Caco-2 (cell line): ENCODE measurements at regions of chr22 and their contacts with region 1.

Region 1: GRCh38 chr22:20909543-20910303 is 7.5 kb upstream of the CRKL start:
- DNase-seq: no peak
- H3K4me3 ChIP-seq: no peak overlapping the region
- H3K4me3 Mint-ChIP-seq: no peak overlapping the region
- H3K27ac Mint-ChIP-seq: no peak overlapping the region
- H3K4me1 ChIP-seq: no peaks in the 10 kb centered on the region
- H3K4me1 Mint-ChIP-seq: no peaks in the 10 kb centered on the region
- H3K27me3 ChIP-seq: no peaks in the 10 kb centered on the region
- H3K27me3 Mint-ChIP-seq: peaks cover 3% of the 10 kb centered on the region
- CTCF ChIP-seq: no peak

Region 2: DNA sequence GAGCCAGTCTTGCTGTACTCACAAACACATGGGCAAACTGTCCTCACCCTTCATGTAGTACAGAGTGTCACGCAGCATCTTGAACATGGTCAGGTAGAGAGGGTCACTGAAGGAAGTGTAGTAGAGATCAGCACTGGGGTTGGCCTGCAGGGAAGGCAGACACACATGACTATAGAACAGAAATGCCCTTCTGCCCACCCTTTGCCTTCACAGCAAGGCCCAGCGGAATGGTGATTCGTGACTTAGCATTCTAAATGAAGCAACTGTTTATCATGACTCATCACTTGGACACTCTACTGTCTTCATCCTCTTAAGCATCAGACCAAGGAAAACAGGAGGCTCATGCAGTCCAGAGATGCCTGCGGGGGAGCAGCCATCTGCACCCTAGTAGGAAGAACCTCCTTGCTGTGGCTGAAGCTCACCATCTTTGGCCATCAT is 102.4 kb before region 1 on chr22:
- CTCF ChIA-PET with region 1: no interaction called
- POLR2A ChIA-PET with region 1: no interaction called
- intact Hi-C with region 1: no loop called
- DNase-seq: peak in 1 of 2 experiments; percentile 16
- H3K4me3 ChIP-seq: no peak overlapping the region
- H3K4me3 Mint-ChIP-seq: no peak overlapping the region
- H3K27ac Mint-ChIP-seq: no peak overlapping the region
- H3K4me1 ChIP-seq: no peaks in the 10 kb centered on the region
- H3K4me1 Mint-ChIP-seq: no peaks in the 10 kb centered on the region
- H3K27me3 ChIP-seq: no peaks in the 10 kb centered on the region
- H3K27me3 Mint-ChIP-seq: no peaks in the 10 kb centered on the region
- CTCF ChIP-seq: no peak

Region 3: DNA sequence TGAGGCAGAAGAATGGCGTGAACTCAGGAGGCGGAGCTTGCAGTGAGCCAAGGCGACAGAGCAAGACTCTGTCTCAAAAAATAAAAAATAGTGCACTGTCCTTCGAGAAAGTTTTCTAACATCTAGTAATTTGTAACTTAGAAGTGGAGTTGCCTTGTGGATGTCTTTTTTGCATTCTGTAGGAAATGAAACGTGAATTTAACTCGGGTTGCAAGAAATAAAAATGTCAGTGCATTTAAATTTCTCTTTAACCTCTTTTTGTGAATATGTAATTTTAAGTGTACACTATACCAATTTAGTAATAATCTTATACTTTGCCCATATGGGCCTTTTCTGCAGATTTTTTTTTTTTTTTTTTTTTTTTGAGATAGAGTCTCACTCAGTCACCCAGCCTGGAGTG is 18.7 kb before region 1 on chr22:
- CTCF ChIA-PET with region 1: interaction called, 12 read pairs
- POLR2A ChIA-PET with region 1: interaction called, 5 read pairs
- intact Hi-C with region 1: no loop called
- DNase-seq: no peak
- H3K4me3 ChIP-seq: no peak overlapping the region
- H3K4me3 Mint-ChIP-seq: no peak overlapping the region
- H3K27ac Mint-ChIP-seq: no peak overlapping the region
- H3K4me1 ChIP-seq: peaks cover 2% of the 10 kb centered on the region; the same call in 1 of the 2 replicates
- H3K4me1 Mint-ChIP-seq: peaks cover under 1% of the 10 kb centered on the region
- H3K27me3 ChIP-seq: no peaks in the 10 kb centered on the region
- H3K27me3 Mint-ChIP-seq: no peaks in the 10 kb centered on the region
- CTCF ChIP-seq: no peak

Region 4: GRCh38 chr22:20957316-20958101 is 47.8 kb after region 1 on chr22:
- CTCF ChIA-PET with region 1: no interaction called
- POLR2A ChIA-PET with region 1: no interaction called
- intact Hi-C with region 1: no loop called
- DNase-seq: peak; percentile 66 to 78
- H3K4me3 ChIP-seq: peak overlapping the region; percentile 77
- H3K4me3 Mint-ChIP-seq: peak overlapping the region; percentile 82
- H3K27ac Mint-ChIP-seq: peak overlapping the region; percentile 59
- H3K4me1 ChIP-seq: peaks cover 36% of the 10 kb centered on the region
- H3K4me1 Mint-ChIP-seq: no peaks in the 10 kb centered on the region
- H3K27me3 ChIP-seq: no peaks in the 10 kb centered on the region
- H3K27me3 Mint-ChIP-seq: no peaks in the 10 kb centered on the region
- CTCF ChIP-seq: no peak